K562 (cell line): ENCODE measurements at regions of chr19 and their contacts with region 1.

Region 1: GRCh38 chr19:56314562-56315077 is at the start of gene ZSCAN5A:
- DNase-seq: peak; percentile 97 to 99 (median 99)
- ATAC-seq: peak; percentile 86
- H3K4me3 ChIP-seq: peak within 1 kb of the TSS; percentile 77
- H3K27ac ChIP-seq: peak within 1 kb of the TSS; percentile 99
- H3K4me1 ChIP-seq: peaks cover 15 to 17% of the 10 kb centered on the region in 2 experiments
- H3K27me3 ChIP-seq: no peaks in the 10 kb centered on the region
- CTCF ChIP-seq: no peak
- EP300 ChIP-seq: no peak
- POLR2A ChIP-seq: peak; percentile 75
- RAD21 ChIP-seq: no peak
- polyA plus RNA-seq, gene ZSCAN5A: 10.3 to 10.6 TPM

Region 2: GRCh38 chr19:56222901-56223300 is 91.7 kb before region 1 on chr19:
- CTCF ChIA-PET with region 1: no interaction called
- POLR2A ChIA-PET with region 1: no interaction called
- in situ Hi-C with region 1: no loop called
- intact Hi-C with region 1: no loop called
- DNase-seq: peak in 1 of 4 experiments; percentile 19
- ATAC-seq: no peak
- H3K4me3 ChIP-seq: no peak overlapping the region
- H3K27ac ChIP-seq: no peak overlapping the region
- H3K4me1 ChIP-seq: no peaks in the 10 kb centered on the region; a peak in 1 of 5 replicates
- H3K27me3 ChIP-seq: peaks cover 0 to 5% of the 10 kb centered on the region in 2 experiments; a peak in 1 of 5 replicates
- CTCF ChIP-seq: 0 out of 6 replicates have a peak, but pooled peaks of 2 of the 3 experiments have one; percentile 12 to 24
- EP300 ChIP-seq: no peak
- POLR2A ChIP-seq: no peak
- RAD21 ChIP-seq: no peak

Region 3: DNA sequence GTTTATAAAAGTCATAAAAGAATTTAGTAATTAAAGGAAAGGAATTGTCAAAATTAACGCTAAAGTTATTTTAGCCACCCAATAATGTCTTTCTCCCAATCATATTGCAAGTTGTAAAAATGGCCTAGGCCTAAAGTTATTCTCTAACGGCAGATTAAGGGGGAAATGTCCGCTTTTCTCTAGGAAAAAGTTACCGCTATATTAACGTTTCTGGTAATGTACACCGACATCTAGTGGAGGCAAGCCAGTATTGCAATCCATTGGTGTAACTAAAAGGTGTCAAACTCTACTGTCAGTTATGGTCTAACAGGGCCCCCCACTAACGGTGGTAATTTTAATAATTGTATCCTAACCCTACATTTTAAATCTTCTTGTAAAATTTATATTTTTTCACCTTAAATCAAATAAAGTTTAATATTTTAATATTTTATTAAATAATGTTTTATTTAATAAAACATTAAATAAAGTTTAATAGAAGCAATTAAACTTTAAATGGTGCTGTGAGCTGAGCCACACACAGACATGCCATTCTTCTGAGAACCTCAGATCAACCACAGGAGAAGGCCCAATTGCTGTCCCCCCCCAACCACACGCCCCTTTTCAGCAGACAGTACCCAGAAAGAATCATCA is 35.9 kb after region 1 on chr19:
- CTCF ChIA-PET with region 1: interaction called, 3 read pairs
- POLR2A ChIA-PET with region 1: no interaction called
- in situ Hi-C with region 1: no loop called
- intact Hi-C with region 1: loop called (anchors 5 kb)
- DNase-seq: peak; percentile 33 to 76 (median 52)
- ATAC-seq: peak; percentile 63
- H3K4me3 ChIP-seq: no peak overlapping the region
- H3K27ac ChIP-seq: no peak overlapping the region
- H3K4me1 ChIP-seq: peaks cover 12 to 23% of the 10 kb centered on the region in 2 experiments
- H3K27me3 ChIP-seq: no peaks in the 10 kb centered on the region
- CTCF ChIP-seq: peak; percentile 74 to 88 (median 75)
- EP300 ChIP-seq: no peak
- POLR2A ChIP-seq: no peak
- RAD21 ChIP-seq: peak; percentile 66 to 82